ENCODE measurements at regions of chr1 and their contacts with region 1.

Region 1: DNA sequence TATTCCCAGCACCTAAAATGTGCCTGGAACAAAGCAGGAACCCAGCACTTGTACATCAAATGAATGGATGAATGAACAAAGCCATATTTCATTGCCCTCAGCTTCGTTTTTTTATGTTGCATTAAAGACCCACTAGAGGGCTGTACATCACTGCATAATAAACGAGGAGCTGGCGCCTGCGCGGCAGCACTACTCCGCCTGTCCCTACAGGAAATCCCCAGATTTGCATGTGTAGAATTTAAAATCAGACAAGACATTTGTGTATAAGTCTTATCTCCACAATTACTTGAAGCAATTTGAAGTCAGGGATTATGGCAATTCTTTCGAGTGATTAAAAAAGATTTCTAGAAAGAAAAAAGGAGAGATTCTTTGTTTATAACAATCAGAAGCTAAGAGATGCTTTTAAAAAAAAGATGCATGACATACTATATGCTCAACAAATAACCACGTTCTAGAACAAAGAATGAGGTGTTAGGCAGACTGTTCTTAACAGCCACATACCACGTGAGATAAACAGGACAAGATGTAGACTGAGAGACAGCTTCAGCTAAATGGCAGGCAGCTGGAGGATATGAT is 5.4 kb upstream of the NEK2 start:
- DNase-seq: peak; percentile 74 to 78
- H3K4me3 ChIP-seq: no peak overlapping the region
- H3K4me3 Mint-ChIP-seq: no peak overlapping the region
- H3K27ac Mint-ChIP-seq: no peak overlapping the region
- H3K4me1 ChIP-seq: no peaks in the 10 kb centered on the region
- H3K4me1 Mint-ChIP-seq: peaks cover 14% of the 10 kb centered on the region
- H3K27me3 ChIP-seq: no peaks in the 10 kb centered on the region
- H3K27me3 Mint-ChIP-seq: no peaks in the 10 kb centered on the region
- CTCF ChIP-seq: peak; percentile 68 to 86

Region 2: GRCh38 chr1:211335522-211336157 is 345.2 kb before region 1 on chr1:
- CTCF ChIA-PET with region 1: no interaction called
- POLR2A ChIA-PET with region 1: no interaction called
- intact Hi-C with region 1: no loop called
- DNase-seq: no peak
- H3K4me3 ChIP-seq: no peak overlapping the region
- H3K4me3 Mint-ChIP-seq: no peak overlapping the region
- H3K27ac Mint-ChIP-seq: no peak overlapping the region
- H3K4me1 ChIP-seq: peaks cover 16% of the 10 kb centered on the region
- H3K4me1 Mint-ChIP-seq: peaks cover 17% of the 10 kb centered on the region
- H3K27me3 ChIP-seq: no peaks in the 10 kb centered on the region
- H3K27me3 Mint-ChIP-seq: no peaks in the 10 kb centered on the region
- CTCF ChIP-seq: no peak

Region 3: DNA sequence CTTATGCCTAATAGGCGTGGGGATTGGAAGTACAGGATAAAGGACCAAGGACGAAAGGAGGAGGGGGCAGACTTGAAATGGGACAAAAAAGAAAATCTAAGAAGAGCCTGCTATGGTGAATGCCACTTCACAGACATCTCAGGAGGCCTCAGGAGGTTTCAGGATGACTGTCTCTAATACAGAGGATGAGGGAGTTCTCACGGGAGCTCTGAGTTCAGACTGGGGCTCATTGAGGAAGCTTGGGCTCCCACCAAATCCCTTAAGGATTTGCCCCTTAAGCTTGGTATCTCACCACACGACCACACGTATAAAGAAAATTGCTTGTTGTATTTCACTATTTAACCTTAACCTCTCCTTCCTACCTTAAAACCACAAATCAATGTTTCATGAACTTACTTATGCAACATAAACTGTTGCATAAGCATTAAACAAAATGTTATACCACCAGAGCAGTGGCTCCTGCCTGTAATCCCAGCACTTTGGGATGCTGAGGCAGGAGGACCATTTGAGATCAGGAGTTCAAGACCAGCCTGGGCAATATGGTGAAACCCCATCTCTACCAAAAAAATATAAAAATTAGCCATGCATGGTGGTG is 114.3 kb before region 1 on chr1:
- CTCF ChIA-PET with region 1: no interaction called
- POLR2A ChIA-PET with region 1: no interaction called
- intact Hi-C with region 1: no loop called
- DNase-seq: no peak
- H3K4me3 ChIP-seq: no peak overlapping the region
- H3K4me3 Mint-ChIP-seq: no peak overlapping the region
- H3K27ac Mint-ChIP-seq: no peak overlapping the region
- H3K4me1 ChIP-seq: no peaks in the 10 kb centered on the region
- H3K4me1 Mint-ChIP-seq: no peaks in the 10 kb centered on the region
- H3K27me3 ChIP-seq: no peaks in the 10 kb centered on the region
- H3K27me3 Mint-ChIP-seq: no peaks in the 10 kb centered on the region
- CTCF ChIP-seq: no peak

Region 4: GRCh38 chr1:211667065-211667617 is 13.7 kb before region 1 on chr1:
- CTCF ChIA-PET with region 1: interaction called, 14 read pairs
- POLR2A ChIA-PET with region 1: interaction called, 13 read pairs
- intact Hi-C with region 1: no loop called
- DNase-seq: peak in 1 of 2 experiments; percentile 61
- H3K4me3 ChIP-seq: no peak overlapping the region
- H3K4me3 Mint-ChIP-seq: no peak overlapping the region
- H3K27ac Mint-ChIP-seq: peak overlapping the region; percentile 10
- H3K4me1 ChIP-seq: peaks cover 17% of the 10 kb centered on the region
- H3K4me1 Mint-ChIP-seq: peaks cover 7% of the 10 kb centered on the region
- H3K27me3 ChIP-seq: no peaks in the 10 kb centered on the region
- H3K27me3 Mint-ChIP-seq: no peaks in the 10 kb centered on the region
- CTCF ChIP-seq: no peak

Region 5: DNA sequence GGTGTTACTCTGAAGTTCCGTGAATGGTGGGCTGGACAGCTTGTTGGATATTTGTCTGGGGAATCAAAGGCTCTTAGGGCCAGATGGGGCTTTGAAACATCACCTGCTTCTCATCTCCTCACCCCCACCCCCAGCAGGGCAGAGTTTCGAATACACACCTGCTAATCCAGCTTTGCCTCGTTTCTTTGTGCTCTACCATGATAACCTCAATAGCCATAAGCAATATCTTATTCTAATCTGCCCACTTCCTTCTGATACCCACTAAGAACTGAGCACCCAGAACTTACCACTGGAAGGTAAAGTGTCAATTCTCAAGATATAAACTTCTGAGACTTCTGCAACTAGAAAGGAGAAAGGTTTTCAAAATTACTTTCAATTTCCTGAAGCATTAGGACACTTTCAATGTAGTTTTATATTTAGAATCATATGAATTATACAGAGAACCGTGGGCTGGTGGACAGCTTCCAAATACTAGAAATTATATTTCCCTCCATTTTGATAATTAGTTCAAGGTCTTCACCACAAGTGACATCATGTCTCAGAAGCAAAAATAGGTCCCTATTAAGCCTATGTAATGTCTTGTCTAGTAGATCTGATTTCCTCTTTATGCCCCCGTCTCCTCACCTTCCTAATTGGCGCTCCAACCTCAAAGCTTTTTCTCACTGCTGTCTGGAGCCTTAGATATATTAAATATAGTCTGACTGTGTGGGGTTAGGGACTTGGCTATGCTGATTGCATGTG is 59.0 kb after region 1 on chr1:
- CTCF ChIA-PET with region 1: interaction called, 6 read pairs
- POLR2A ChIA-PET with region 1: no interaction called
- intact Hi-C with region 1: loop called (anchors 5 kb)
- DNase-seq: no peak
- H3K4me3 ChIP-seq: no peak overlapping the region
- H3K4me3 Mint-ChIP-seq: no peak overlapping the region
- H3K27ac Mint-ChIP-seq: no peak overlapping the region
- H3K4me1 ChIP-seq: peaks cover 16% of the 10 kb centered on the region
- H3K4me1 Mint-ChIP-seq: peaks cover 13% of the 10 kb centered on the region
- H3K27me3 ChIP-seq: no peaks in the 10 kb centered on the region
- H3K27me3 Mint-ChIP-seq: no peaks in the 10 kb centered on the region
- CTCF ChIP-seq: no peak

Region 6: DNA sequence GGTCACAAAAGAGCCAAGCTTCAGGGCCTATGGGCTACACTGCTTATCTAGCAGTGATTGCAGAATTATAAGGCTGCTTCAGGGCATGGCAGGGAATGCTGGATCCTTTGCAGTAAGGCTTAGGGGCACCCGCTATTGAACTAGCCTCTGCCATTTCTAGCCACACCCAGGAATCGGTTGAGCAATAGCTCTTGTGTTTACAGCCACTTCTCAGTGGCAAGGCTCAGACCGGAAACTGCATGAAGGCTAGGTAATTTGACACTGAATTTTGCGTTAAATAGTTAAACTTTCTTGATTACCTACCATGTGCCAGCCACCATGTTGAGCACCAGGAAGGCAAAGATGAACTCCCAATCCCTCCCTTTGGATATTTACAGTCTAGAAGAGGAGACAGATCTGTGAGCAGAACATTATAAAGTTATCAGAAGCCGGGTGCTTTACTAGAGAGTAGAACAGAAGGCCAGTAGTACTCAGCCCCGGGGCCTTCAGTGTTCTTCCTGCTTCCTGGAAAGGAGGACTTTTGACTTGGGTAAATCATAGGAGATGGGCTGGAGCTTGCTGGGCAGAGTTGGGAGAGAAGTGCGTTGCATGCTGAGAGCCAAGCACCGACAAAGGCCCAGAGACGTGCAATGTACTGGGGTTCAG is 248.3 kb after region 1 on chr1:
- CTCF ChIA-PET with region 1: interaction called, 4 read pairs
- POLR2A ChIA-PET with region 1: no interaction called
- intact Hi-C with region 1: loop called (anchors 1 kb)
- DNase-seq: peak; percentile 44 to 66
- H3K4me3 ChIP-seq: no peak overlapping the region
- H3K4me3 Mint-ChIP-seq: no peak overlapping the region
- H3K27ac Mint-ChIP-seq: peak overlapping the region; percentile 23
- H3K4me1 ChIP-seq: peaks cover 26% of the 10 kb centered on the region
- H3K4me1 Mint-ChIP-seq: peaks cover 20% of the 10 kb centered on the region
- H3K27me3 ChIP-seq: no peaks in the 10 kb centered on the region
- H3K27me3 Mint-ChIP-seq: no peaks in the 10 kb centered on the region
- CTCF ChIP-seq: no peak

Region 7: GRCh38 chr1:212012034-212012740 is 331.3 kb after region 1 on chr1:
- CTCF ChIA-PET with region 1: interaction called, 9 read pairs
- POLR2A ChIA-PET with region 1: no interaction called
- intact Hi-C with region 1: loop called (anchors 1 kb)
- DNase-seq: peak; percentile 68 to 74
- H3K4me3 ChIP-seq: no peak overlapping the region
- H3K4me3 Mint-ChIP-seq: no peak overlapping the region
- H3K27ac Mint-ChIP-seq: no peak overlapping the region
- H3K4me1 ChIP-seq: peaks cover 25% of the 10 kb centered on the region
- H3K4me1 Mint-ChIP-seq: peaks cover 19% of the 10 kb centered on the region
- H3K27me3 ChIP-seq: no peaks in the 10 kb centered on the region
- H3K27me3 Mint-ChIP-seq: no peaks in the 10 kb centered on the region
- CTCF ChIP-seq: peak; percentile 88 to 94

Region 8: GRCh38 chr1:212368073-212368484 is 687.2 kb after region 1 on chr1:
- CTCF ChIA-PET with region 1: no interaction called
- POLR2A ChIA-PET with region 1: no interaction called
- intact Hi-C with region 1: loop called (anchors 2 kb)
- DNase-seq: peak; percentile 73 to 76
- H3K4me3 ChIP-seq: no peak overlapping the region
- H3K4me3 Mint-ChIP-seq: no peak overlapping the region
- H3K27ac Mint-ChIP-seq: peak overlapping the region; percentile 56
- H3K4me1 ChIP-seq: 0 out of 2 replicates have a peak, but pooled peaks cover 5% of the 10 kb centered on the region
- H3K4me1 Mint-ChIP-seq: no peaks in the 10 kb centered on the region
- H3K27me3 ChIP-seq: no peaks in the 10 kb centered on the region
- H3K27me3 Mint-ChIP-seq: no peaks in the 10 kb centered on the region
- CTCF ChIP-seq: peak; percentile 86